Naive thymus-derived CD8-positive, alpha-beta T cell (primary cell): ENCODE measurements at regions of chr6 and their contacts with region 1.

Region 1: GRCh38 chr6:132813173-132813856 is 1.1 kb upstream of the RPS12 start:
- DNase-seq: peak in 6 of 10 donors; percentile 17 to 68 (median 44)
- ATAC-seq: peak; percentile 15 to 39
- H3K4me3 Mint-ChIP-seq: peak overlapping the region; percentile 88 to 100 (median 98)
- H3K27ac Mint-ChIP-seq: peak overlapping the region; percentile 97 to 100 (median 99)
- H3K4me1 Mint-ChIP-seq: peaks cover 29 to 56% (median 48%) of the 10 kb centered on the region in 4 donors
- H3K27me3 Mint-ChIP-seq: peaks cover 0 to 3% (median 0%) of the 10 kb centered on the region in 5 donors

Region 2: DNA sequence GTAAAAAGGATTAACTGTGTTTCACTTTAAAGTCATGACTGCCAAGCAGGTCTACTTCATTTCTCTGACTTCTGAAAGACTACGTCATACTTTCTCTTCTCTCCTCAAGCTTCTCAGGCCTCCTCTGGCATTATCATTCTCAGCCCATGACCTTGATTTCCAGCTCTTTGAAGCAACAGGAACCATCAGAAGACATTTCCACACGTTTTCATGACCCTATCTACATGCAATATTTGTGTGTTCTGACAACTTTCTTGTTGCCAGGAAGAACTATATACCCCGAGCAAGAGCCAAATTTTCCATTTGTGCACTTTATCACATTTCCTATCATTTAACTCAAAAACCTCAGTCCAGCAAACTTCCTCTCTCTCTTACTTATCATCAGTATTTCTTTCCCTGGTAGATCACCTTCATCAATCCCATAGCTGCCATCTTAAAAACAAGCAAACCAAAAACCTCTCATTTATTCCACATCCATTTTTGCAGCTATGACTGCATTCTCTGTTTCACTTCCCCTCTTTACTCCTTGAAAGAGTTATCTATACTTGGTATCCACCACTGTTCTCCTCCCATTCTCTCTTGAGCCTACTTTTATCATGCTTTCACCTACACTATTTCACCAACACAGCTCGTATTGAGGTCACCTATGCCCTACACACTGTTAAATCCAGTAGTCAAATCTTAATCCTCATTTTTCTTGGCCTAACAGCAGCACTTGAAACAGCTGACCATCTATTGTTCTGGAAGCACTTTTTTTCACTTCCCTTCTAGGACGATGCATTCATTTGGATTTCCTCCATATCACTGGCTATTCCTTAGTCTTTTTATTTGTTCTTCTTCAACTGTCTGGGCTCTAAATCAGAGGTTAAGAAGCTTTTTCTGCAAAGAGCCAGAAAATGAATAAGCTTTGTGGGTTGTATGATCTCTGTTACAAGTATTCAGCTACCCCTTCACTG is 347.5 kb before region 1 on chr6:
- POLR2A ChIA-PET with region 1: interaction called, 10 read pairs
- DNase-seq: no peak
- ATAC-seq: no peak
- H3K4me3 Mint-ChIP-seq: no peak overlapping the region
- H3K27ac Mint-ChIP-seq: no peak overlapping the region
- H3K4me1 Mint-ChIP-seq: no peaks in the 10 kb centered on the region
- H3K27me3 Mint-ChIP-seq: no peaks in the 10 kb centered on the region

Region 3: GRCh38 chr6:132512638-132513632 is 300.4 kb before region 1 on chr6 and contains the start of gene STX7:
- POLR2A ChIA-PET with region 1: interaction called, 35 read pairs
- DNase-seq: peak; percentile 79 to 92 (median 84)
- ATAC-seq: peak; percentile 92 to 94
- H3K4me3 Mint-ChIP-seq: peak within 1 kb of the TSS; percentile 93 to 99 (median 98)
- H3K27ac Mint-ChIP-seq: peak within 1 kb of the TSS; percentile 82 to 96 (median 94)
- H3K4me1 Mint-ChIP-seq: peaks cover 8 to 49% (median 38%) of the 10 kb centered on the region in 4 donors
- H3K27me3 Mint-ChIP-seq: peaks cover 0 to 3% (median 1%) of the 10 kb centered on the region in 5 donors
- polyA plus RNA-seq, gene STX7: 2.9 to 9.6 (median 6.5) TPM

Region 4: DNA sequence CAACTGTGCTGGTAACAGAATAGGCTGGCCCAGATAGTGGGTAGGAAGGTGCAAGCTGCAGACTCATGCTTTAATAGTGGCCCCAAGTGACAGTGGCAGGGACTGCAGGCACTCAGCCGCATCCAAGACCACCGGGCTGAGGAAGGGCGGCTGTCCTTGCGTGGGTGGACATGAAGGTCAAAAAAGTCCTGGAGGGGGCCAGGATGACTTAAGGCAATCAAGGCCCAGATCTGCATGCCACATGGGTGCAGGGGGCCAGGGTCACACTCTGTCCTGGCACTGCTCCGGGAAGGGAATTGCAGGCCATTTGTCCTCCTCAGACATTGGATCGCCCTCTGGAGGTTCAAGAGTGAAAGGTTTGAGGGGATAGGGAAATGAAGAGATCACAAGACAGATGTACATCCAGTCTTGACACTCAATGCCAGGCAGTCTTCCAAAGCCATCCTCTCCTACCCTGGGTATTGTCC is 45.2 kb before region 1 on chr6:
- POLR2A ChIA-PET with region 1: interaction called, 94 read pairs
- DNase-seq: peak in 6 of 10 donors; percentile 3 to 59 (median 6)
- ATAC-seq: peak; percentile 43 to 46
- H3K4me3 Mint-ChIP-seq: no peak overlapping the region
- H3K27ac Mint-ChIP-seq: peak overlapping the region in 2 of 10 donors; percentile 4 to 24
- H3K4me1 Mint-ChIP-seq: peaks cover 4 to 22% (median 17%) of the 10 kb centered on the region in 4 donors
- H3K27me3 Mint-ChIP-seq: no peaks in the 10 kb centered on the region

Region 5: GRCh38 chr6:132798869-132799538 is 14.3 kb before region 1 on chr6:
- POLR2A ChIA-PET with region 1: interaction called, 137 read pairs
- DNase-seq: peak; percentile 40 to 80 (median 66)
- ATAC-seq: peak; percentile 84 to 86
- H3K4me3 Mint-ChIP-seq: no peak overlapping the region
- H3K27ac Mint-ChIP-seq: no peak overlapping the region
- H3K4me1 Mint-ChIP-seq: peaks cover 6 to 43% (median 21%) of the 10 kb centered on the region in 4 donors
- H3K27me3 Mint-ChIP-seq: no peaks in the 10 kb centered on the region

Region 6: GRCh38 chr6:132830334-132830751 is 17.0 kb after region 1 on chr6:
- POLR2A ChIA-PET with region 1: interaction called, 28 read pairs
- DNase-seq: no peak
- ATAC-seq: no peak
- H3K4me3 Mint-ChIP-seq: no peak overlapping the region
- H3K27ac Mint-ChIP-seq: no peak overlapping the region
- H3K4me1 Mint-ChIP-seq: no peaks in the 10 kb centered on the region
- H3K27me3 Mint-ChIP-seq: no peaks in the 10 kb centered on the region

Region 7: DNA sequence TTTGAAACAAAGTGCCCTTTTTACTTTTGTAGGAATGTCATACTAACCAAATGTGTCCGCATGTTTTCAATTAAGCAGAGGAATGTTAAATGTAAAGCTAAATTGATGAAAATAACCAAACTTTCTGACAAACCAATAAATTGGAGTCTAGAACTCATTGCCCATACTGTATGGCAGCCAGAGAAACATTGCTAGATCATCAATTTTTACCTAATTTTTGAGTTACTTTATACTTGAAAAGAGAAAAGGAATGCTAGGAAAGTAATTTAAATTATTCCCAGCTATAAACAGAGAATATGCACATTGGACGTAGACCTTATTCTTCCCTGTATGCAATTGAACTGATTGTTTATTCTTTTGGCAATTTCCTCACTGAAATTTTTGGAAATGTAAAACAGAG is 45.4 kb after region 1 on chr6:
- POLR2A ChIA-PET with region 1: no interaction called
- DNase-seq: no peak
- ATAC-seq: no peak
- H3K4me3 Mint-ChIP-seq: no peak overlapping the region
- H3K27ac Mint-ChIP-seq: no peak overlapping the region
- H3K4me1 Mint-ChIP-seq: no peaks in the 10 kb centered on the region
- H3K27me3 Mint-ChIP-seq: peaks cover 0 to 3% (median 0%) of the 10 kb centered on the region in 5 donors

Region 8: GRCh38 chr6:132962936-132963868 is 149.9 kb after region 1 on chr6:
- POLR2A ChIA-PET with region 1: no interaction called
- DNase-seq: peak in 9 of 10 donors; percentile 24 to 63 (median 33)
- ATAC-seq: peak; percentile 63 to 71
- H3K4me3 Mint-ChIP-seq: no peak overlapping the region
- H3K27ac Mint-ChIP-seq: no peak overlapping the region
- H3K4me1 Mint-ChIP-seq: no peaks in the 10 kb centered on the region
- H3K27me3 Mint-ChIP-seq: peaks cover 7 to 35% (median 20%) of the 10 kb centered on the region in 5 donors